BJ (cell line): ENCODE measurements at regions of chr9 and their contacts with region 1.

Region 1: GRCh38 chr9:114108016-114108833 is 9.1 kb upstream of the KIF12 start:
- DNase-seq: no peak
- H3K4me3 ChIP-seq: no peak overlapping the region
- H3K27me3 ChIP-seq: 0 out of 2 replicates have a peak, but pooled peaks cover 1% of the 10 kb centered on the region
- CTCF ChIP-seq: peak; percentile 100

Region 2: DNA sequence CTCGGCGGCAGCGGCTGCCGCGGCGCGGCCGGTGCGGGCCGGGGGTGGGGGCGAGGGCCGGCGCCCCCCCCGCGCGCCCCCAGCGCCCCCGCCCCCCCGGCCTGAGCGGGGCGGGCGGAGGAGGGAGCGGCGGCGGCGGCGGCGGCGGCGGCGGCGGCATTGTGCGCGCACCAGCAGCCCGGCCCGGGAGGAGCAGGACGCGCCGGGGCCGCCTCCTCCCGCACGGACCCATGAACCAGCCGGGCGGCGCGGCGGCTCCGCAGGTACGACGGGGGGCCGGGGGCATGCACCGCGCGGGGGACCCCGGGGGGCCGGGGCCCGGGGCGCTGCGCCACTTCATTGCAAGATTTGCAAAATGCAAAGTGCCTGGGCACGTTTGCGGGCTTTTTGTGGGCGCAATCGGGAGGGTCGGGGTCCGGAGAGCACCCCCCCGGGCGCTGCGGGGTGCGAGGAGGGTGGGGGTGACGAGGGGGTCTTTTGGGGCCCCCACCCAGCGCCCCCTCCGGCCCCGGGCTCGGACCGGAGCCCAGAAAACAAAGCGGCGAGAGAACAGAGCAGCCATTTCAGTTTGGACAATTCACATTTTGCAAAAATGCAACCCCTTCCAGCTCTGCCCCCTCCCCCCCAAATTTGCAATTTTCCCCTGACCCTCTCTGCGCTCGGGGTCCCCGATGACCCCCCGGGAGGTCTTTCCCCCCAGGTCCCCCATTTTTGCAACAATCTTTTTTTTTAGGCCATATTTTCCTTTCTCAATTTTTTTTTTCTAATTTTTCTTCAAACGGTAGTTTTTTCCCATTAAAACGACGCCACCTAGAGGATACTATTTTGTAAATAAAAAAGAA is 231.9 kb before region 1 on chr9 and contains the start of gene ZNF618:
- CTCF ChIA-PET with region 1: no interaction called
- POLR2A ChIA-PET with region 1: no interaction called
- DNase-seq: no peak
- H3K4me3 ChIP-seq: peak within 1 kb of the TSS; percentile 80
- H3K27me3 ChIP-seq: no peaks in the 10 kb centered on the region
- CTCF ChIP-seq: peak; percentile 40; the same call in 1 of the 2 replicates
- polyA plus RNA-seq, gene ZNF618: 4.0 and 5.4 TPM in 2 replicates

Region 3: DNA sequence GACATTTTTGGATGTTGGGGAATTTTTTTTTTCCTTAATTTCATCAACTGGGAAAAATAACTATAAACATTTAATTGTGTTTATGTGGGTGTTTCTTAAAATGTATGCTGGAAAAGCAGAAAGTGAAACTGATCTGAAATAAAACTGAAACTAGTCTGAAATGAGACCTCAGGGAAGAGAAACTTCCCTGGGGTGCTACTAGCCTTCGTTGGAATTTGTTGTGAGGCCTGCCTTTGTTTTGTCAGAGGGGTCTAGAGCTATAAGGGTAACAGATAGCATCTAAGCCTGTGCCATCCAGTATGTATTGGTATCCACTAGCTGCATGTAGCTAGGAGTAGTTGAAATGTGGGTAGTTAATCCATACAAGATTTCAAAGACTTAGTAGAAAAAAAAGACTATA is 221.8 kb before region 1 on chr9:
- CTCF ChIA-PET with region 1: no interaction called
- POLR2A ChIA-PET with region 1: no interaction called
- DNase-seq: no peak
- H3K4me3 ChIP-seq: 0 out of 2 replicates have a peak overlapping the region, but pooled peaks have one; percentile 11
- H3K27me3 ChIP-seq: no peaks in the 10 kb centered on the region
- CTCF ChIP-seq: no peak

Region 4: GRCh38 chr9:114088571-114089170 is 19.6 kb before region 1 on chr9:
- CTCF ChIA-PET with region 1: interaction called, 41 read pairs
- POLR2A ChIA-PET with region 1: no interaction called
- DNase-seq: no peak
- H3K4me3 ChIP-seq: no peak overlapping the region
- H3K27me3 ChIP-seq: peaks cover 10% of the 10 kb centered on the region
- CTCF ChIP-seq: no peak

Region 5: DNA sequence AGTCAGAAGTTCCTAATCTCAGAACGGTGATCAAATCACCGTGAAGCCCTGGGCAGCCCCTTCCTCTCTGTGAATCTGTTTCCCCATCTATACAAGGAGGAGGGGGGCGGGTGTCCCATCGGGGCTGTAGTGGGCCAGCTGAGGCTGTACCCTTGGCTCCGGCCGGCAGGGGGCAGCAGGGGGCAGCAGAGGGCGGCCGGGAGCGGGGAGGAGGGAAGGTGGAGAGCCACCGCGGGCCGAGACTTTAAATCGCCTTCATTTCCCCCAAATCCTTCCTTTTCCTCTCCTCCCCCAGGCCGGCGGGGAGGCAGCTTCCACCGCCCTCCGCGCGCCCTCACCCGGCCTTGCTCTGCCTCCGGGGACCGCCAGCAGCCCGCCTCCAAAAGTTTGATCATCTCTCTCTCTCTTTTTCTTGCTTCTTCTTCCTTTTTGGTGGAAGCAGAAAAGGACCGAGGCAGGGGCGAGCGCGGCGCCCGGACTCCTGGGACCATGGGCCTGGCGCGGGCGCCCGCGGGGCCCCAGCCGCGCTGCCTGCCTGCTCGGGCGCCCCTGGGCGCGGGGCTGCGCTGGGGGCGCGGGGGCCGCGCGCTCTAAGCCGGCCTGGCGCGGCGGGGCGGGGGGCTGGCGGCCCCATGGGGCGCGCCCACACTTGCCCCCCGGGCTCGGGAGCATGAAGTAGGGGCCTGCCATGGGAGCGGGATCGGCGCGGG is 47.2 kb after region 1 on chr9 and contains the start of gene COL27A1:
- CTCF ChIA-PET with region 1: interaction called, 50 read pairs
- POLR2A ChIA-PET with region 1: no interaction called
- DNase-seq: no peak
- H3K4me3 ChIP-seq: peak within 1 kb of the TSS; percentile 66
- H3K27me3 ChIP-seq: peaks cover 12% of the 10 kb centered on the region
- CTCF ChIP-seq: peak; percentile 94
- polyA plus RNA-seq, gene COL27A1: 11.6 and 16.6 TPM in 2 replicates

Region 6: DNA sequence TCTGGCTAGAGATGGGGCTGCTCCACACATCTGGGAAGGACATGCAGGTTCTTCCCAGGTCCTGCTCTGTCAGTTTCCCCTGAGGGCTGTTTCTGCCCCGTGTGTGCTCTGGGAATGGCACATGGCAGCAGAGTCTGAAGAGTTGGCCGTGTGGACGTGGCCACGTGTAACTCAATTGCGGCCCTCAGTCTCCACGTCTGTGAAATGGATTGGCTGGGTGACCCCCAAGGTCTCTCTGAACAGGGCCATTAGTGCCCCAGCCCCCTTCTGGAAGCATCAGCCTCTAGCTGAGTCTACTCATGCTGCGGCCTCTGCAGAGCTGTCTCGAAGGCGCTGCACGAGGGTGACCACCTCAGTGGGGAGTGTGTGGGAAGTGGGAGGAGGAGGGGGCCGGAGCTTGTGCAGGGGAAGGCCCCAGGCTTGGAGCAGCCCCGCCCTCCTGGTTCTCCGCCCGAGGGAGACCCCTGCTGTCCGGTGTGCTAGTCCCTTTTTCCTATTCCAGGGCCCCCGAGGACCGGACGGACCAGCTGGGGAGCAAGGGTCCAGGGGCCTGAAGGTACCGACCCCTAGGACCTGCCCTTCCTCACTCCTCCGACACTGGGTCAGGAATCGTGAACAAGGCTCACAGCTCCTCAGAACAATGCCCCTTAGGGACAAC is 155.8 kb after region 1 on chr9:
- CTCF ChIA-PET with region 1: interaction called, 11 read pairs
- POLR2A ChIA-PET with region 1: no interaction called
- DNase-seq: no peak
- H3K4me3 ChIP-seq: no peak overlapping the region
- H3K27me3 ChIP-seq: no peaks in the 10 kb centered on the region
- CTCF ChIP-seq: peak; percentile 37; the same call in 1 of the 2 replicates

Region 7: DNA sequence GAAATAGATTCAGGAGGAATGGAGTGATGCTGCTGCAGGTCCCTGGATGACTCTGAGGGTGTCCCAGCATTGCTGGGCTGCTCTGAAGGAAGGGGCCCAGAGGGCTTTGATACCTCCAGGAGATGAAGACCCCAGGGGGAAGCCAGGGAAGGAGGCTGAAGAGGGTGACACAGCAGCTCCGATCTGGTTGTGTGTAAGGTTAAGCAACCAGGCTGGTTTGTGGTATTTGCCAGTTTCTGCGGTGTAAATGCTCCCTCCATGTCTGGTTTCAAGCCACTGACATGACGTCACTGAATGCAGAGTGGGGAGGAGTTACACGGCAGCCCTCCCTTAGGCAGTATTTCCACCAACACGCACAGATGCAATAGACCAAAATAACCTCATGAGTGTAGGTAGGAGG is 174.7 kb after region 1 on chr9:
- CTCF ChIA-PET with region 1: interaction called, 30 read pairs
- POLR2A ChIA-PET with region 1: no interaction called
- DNase-seq: peak; percentile 73
- H3K4me3 ChIP-seq: no peak overlapping the region
- H3K27me3 ChIP-seq: no peaks in the 10 kb centered on the region
- CTCF ChIP-seq: no peak

Region 8: GRCh38 chr9:114299286-114300152 is 191.3 kb after region 1 on chr9:
- CTCF ChIA-PET with region 1: interaction called, 151 read pairs
- POLR2A ChIA-PET with region 1: no interaction called
- DNase-seq: no peak
- H3K4me3 ChIP-seq: no peak overlapping the region
- H3K27me3 ChIP-seq: no peaks in the 10 kb centered on the region
- CTCF ChIP-seq: no peak